ENCODE measurements at regions of chr12 and their contacts with region 1.

Region 1: GRCh38 chr12:56007564-56008559 is 10.8 kb downstream of the SUOX start:
- DNase-seq: peak; percentile 82
- ATAC-seq: peak; percentile 83
- H3K4me3 Mint-ChIP-seq: peak overlapping the region; percentile 78
- H3K27ac Mint-ChIP-seq: peak overlapping the region; percentile 92
- H3K4me1 Mint-ChIP-seq: peaks cover 28% of the 10 kb centered on the region
- H3K27me3 Mint-ChIP-seq: no peaks in the 10 kb centered on the region

Region 2: GRCh38 chr12:56020423-56021184 is 12.7 kb after region 1 on chr12 and contains the start of gene IKZF4:
- CTCF ChIA-PET with region 1: interaction called, 7 read pairs
- POLR2A ChIA-PET with region 1: interaction called, 4 read pairs
- intact Hi-C with region 1: loop called (anchors 1 kb)
- DNase-seq: peak; percentile 60
- ATAC-seq: peak; percentile 48
- H3K4me3 Mint-ChIP-seq: peak within 1 kb of the TSS; percentile 80
- H3K27ac Mint-ChIP-seq: peak within 1 kb of the TSS; percentile 95
- H3K4me1 Mint-ChIP-seq: peaks cover 24% of the 10 kb centered on the region
- H3K27me3 Mint-ChIP-seq: no peaks in the 10 kb centered on the region
- total RNA-seq, gene IKZF4: 14.9 to 16.3 TPM

Region 3: GRCh38 chr12:56029666-56030293 is 21.9 kb after region 1 on chr12:
- CTCF ChIA-PET with region 1: interaction called, 32 read pairs
- POLR2A ChIA-PET with region 1: no interaction called
- intact Hi-C with region 1: no loop called
- DNase-seq: peak; percentile 63
- ATAC-seq: peak; percentile 60
- H3K4me3 Mint-ChIP-seq: no peak overlapping the region
- H3K27ac Mint-ChIP-seq: no peak overlapping the region
- H3K4me1 Mint-ChIP-seq: peaks cover 29% of the 10 kb centered on the region
- H3K27me3 Mint-ChIP-seq: no peaks in the 10 kb centered on the region

Measured in activated CD4-positive, alpha-beta T cell treated with anti-CD3 and anti-CD28 coated beads for 36 hours (primary cell).